Heart right ventricle (tissue), 16 donors: ENCODE measurements at regions of chr5 and their contacts with region 1.

Region 1: GRCh38 chr5:56270568-56271392 is 37.6 kb upstream of the ANKRD55 start:
- DNase-seq: peak; percentile 80 to 85
- ATAC-seq: peak; percentile 98 to 100 (median 99)
- H3K4me3 ChIP-seq: no peak overlapping the region
- H3K27ac ChIP-seq: peak overlapping the region in 2 of 10 donors; percentile 5 to 58
- H3K4me1 ChIP-seq: peaks cover 0 to 20% (median 8%) of the 10 kb centered on the region in 9 donors
- H3K27me3 ChIP-seq: no peaks in the 10 kb centered on the region
- CTCF ChIP-seq: peak; percentile 92 to 100 (median 99)

Region 2: DNA sequence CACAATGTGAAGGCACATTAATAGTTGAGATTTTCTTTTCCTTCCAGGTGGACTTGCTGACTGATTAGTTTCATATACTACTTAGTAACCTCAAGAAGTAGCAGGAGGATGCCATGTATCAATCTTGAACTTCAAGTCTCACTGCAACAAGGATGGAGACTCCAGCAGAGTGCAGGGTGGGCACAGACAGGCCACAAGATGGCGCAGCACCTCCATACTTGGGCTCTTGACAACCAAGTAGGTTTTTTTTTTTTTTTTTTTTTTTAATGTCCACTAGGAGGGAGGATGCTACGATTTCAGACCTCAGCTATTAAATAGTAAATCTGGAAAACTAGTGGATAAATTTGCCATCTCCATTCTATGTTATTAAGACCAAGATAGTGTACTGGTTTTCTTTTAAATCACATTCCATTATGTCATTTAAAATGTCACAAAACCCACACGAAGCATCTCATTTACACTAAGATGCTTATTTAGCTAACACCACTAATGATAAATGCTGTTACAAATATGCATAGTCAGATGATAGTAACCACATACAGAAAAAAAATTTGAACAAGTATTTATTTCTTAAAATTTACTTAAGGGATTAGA is 334.6 kb before region 1 on chr5:
- intact Hi-C with region 1: loop called in 3 of 10 experiments (anchors 2 to 10 kb)
- DNase-seq: peak; percentile 81 to 83
- ATAC-seq: peak; percentile 59 to 90 (median 84)
- H3K4me3 ChIP-seq: no peak overlapping the region
- H3K27ac ChIP-seq: no peak overlapping the region
- H3K4me1 ChIP-seq: no peaks in the 10 kb centered on the region
- H3K27me3 ChIP-seq: no peaks in the 10 kb centered on the region
- CTCF ChIP-seq: peak; percentile 73 to 97 (median 89)

Region 3: DNA sequence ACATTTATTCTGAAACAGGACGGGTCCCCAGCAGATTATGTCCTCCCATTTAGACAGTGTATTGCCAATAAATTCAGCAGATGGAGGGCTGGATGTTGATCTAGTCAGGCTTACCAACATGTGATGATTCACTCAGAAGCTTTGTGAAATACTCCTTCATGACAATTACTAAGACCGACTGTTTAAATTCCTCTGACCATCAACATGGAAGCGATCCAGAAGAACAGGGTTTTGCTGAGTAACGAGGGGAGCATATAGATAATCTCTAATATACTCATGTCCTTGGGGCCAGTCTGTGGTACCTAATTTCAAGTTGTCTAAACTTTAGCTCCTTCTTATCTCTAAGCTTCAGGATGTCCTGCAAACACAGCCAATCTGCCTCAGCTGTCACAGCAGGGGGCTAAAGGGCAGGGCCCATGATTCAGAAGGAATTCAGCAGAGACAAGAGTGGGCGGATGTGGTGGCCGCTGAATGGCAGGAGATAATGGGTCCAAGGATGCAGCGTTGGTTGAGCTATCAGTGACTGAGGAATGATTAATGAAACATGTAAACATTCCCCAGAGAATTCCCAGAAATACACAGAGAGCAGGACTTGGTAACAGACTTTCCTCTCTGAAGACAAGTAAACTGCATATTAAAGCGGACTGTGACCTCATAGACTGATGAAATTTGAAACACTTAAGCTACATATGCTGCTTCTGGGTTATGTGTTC is 147.1 kb before region 1 on chr5:
- intact Hi-C with region 1: no loop called
- DNase-seq: peak; percentile 37 to 56
- ATAC-seq: peak; percentile 75 to 96 (median 84)
- H3K4me3 ChIP-seq: no peak overlapping the region
- H3K27ac ChIP-seq: peak overlapping the region in 7 of 10 donors; percentile 0 to 70 (median 29)
- H3K4me1 ChIP-seq: peaks cover 0 to 34% (median 12%) of the 10 kb centered on the region in 9 donors
- H3K27me3 ChIP-seq: no peaks in the 10 kb centered on the region
- CTCF ChIP-seq: no peak

Region 4: DNA sequence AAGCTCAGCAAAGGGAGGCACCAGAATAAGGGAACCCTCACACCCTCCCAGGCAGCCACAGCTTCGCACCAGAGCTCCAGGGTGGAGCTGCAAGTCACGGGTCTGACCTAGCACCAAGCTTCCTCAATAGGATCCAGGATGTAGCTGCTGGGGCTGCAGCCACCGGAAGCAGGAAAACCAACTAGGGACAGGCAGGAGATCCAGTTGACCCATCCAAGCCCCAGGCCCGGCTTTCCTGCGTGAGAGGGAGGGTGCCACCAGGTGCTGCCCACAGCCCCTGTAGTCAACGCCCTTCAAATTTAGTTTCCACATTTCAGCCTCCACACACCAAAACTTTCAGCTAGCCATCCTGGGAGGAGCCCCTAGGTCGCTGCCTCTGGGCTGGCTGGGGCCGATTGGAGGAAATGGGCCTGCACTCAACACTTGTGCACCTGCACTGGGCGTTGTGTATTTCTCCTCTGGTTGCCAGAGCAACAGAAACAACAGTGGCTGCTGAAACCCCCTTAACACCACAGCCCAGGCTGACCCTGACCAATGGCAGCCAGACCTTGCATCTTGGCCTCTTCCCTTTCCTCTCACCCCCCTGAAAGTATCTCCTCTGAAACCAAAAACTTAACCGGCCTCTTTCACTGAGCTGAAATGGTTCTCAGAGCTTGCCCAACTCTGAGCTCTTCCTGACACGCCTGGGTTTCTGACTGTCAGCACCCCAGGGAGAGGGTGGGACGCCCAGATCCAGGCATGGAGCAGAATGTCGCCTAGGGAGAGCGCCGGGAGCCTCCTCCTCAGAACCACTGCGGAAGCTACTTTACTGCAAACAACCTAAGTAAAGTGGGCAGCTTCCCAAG is 318.1 kb after region 1 on chr5:
- intact Hi-C with region 1: loop called in 1 of 10 experiments (anchors 10 kb)
- DNase-seq: peak; percentile 58 to 66
- ATAC-seq: peak; percentile 44 to 83 (median 68)
- H3K4me3 ChIP-seq: no peak overlapping the region
- H3K27ac ChIP-seq: peak overlapping the region; percentile 8 to 80 (median 69)
- H3K4me1 ChIP-seq: peaks cover 7 to 50% (median 41%) of the 10 kb centered on the region in 9 donors
- H3K27me3 ChIP-seq: no peaks in the 10 kb centered on the region
- CTCF ChIP-seq: no peak

Region 5: DNA sequence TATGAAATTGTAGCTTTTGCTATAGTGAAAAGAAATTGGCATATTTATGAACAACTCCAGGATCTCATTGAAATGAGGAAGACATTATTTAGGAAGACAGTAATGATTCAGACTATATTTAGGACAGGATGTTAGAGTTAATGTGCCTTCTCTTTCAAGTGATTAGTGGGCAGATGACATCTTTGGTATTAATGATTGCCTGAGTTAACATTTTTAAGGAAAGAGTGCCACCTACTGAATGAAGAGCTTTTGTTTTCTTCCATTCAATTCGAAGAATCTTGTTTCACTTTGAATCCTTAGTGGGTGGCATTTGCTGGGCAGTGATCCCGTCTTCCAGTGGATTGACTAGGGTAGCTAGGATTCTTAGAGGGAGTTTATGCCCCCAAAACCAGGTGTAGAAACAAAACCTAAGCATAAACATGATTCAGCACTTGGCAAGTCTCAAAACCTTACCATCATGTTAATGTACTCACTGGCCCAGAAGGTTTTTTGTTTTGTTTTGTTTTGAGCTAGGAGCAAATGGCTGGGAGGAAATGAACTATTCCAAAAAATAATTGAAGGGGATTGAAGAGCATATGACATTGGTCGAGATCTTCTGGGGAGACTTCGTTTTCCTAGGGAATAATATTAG is 567.7 kb after region 1 on chr5:
- intact Hi-C with region 1: loop called (anchors 1 to 5 kb)
- DNase-seq: no peak
- ATAC-seq: peak in 7 of 8 donors; percentile 43 to 75 (median 62)
- H3K4me3 ChIP-seq: no peak overlapping the region
- H3K27ac ChIP-seq: peak overlapping the region in 9 of 10 donors; percentile 6 to 66 (median 49)
- H3K4me1 ChIP-seq: peaks cover 0 to 96% (median 56%) of the 10 kb centered on the region in 9 donors
- H3K27me3 ChIP-seq: no peaks in the 10 kb centered on the region
- CTCF ChIP-seq: peak; percentile 26 to 82 (median 63)

Region 6: DNA sequence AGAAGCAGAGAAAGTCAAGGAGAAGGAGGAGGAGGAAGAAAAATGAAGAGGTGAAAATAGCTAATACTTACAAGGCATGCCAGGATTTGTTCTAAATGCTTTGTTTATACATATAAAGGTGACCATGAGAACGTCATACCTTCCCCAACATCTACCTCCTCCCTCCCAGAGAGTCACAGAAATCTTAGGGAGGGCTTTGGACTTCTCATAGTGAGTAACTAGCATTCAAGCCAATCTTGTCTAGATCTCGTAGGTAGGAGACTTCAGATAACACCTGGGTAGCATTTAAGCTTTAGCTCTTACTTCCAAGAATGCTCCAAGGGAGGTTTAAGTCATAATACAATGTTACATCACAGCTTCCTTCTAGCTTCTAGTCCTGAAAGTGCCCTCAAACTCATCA is 866.6 kb after region 1 on chr5:
- intact Hi-C with region 1: loop called in 3 of 10 experiments (anchors 2 to 10 kb)
- DNase-seq: no peak
- ATAC-seq: no peak
- H3K4me3 ChIP-seq: no peak overlapping the region
- H3K27ac ChIP-seq: no peak overlapping the region
- H3K4me1 ChIP-seq: no peaks in the 10 kb centered on the region
- H3K27me3 ChIP-seq: peaks cover 0 to 8% (median 0%) of the 10 kb centered on the region in 7 donors
- CTCF ChIP-seq: no peak